ENCODE measurements at regions of chr1 and their contacts with region 1.

Region 1: DNA sequence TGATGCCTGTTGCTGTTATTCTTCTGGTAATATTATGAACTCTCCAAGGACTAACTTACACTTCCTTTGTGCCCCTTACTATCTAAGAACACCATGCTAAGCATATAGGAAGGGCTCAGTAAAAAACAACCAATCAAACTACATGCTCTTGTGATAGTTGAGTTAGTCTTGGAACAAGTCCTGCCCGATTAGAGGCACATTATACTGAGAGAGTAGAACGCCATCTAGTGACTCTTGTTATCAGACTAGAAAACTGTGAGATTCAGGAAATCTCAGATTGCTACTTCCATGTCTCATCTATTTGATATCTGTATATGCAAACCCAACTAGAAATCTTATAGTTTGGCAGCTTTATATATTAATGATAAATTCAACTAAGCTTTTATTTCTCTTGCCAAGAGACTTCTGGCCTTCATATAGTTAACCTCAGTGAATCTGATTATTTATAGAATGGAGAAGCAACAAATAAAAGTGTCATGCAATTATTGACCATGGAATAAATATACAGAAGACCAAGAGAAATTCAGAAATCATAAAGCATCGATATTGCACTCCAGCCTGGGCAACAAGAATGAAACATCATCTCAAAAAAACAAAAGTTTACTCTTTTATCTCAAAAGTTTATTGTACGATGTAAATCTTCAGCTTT is 7.8 kb upstream of the SRRM1 start:
- DNase-seq: peak; percentile 66
- H3K4me3 ChIP-seq: no peak overlapping the region
- H3K27ac ChIP-seq: no peak overlapping the region
- H3K4me1 ChIP-seq: no peaks in the 10 kb centered on the region
- H3K27me3 ChIP-seq: no peaks in the 10 kb centered on the region
- CTCF ChIP-seq: peak; percentile 76
- EP300 ChIP-seq: no peak
- RAD21 ChIP-seq: peak; percentile 86

Region 2: GRCh38 chr1:24541711-24542346 is 93.5 kb before region 1 on chr1:
- CTCF ChIA-PET with region 1: interaction called, 25 read pairs
- POLR2A ChIA-PET with region 1: no interaction called
- DNase-seq: peak; percentile 46
- H3K4me3 ChIP-seq: no peak overlapping the region; a peak in 1 of 4 replicates
- H3K27ac ChIP-seq: no peak overlapping the region
- H3K4me1 ChIP-seq: no peaks in the 10 kb centered on the region
- H3K27me3 ChIP-seq: no peaks in the 10 kb centered on the region
- CTCF ChIP-seq: peak; percentile 73
- EP300 ChIP-seq: no peak
- RAD21 ChIP-seq: peak; percentile 63

Region 3: DNA sequence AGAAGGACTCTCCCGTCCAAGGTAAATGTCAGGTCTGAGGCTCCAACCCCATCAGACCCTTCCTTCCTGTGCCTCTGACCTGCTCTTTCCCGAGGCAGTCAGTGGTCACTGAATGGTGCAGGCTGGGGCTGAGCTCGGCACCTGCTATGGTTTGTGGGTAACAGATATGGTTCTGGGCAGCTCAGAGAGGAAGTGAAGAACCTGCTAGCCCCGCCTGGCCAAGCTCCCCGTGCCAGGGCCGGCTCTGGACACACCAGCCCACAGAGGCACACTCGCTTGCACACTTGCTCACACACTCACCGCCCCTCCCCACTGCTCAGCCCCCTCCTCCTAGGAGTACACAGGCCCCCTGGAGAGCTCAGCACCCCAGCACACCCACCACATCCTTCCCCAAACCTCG is 63.0 kb before region 1 on chr1:
- CTCF ChIA-PET with region 1: no interaction called
- POLR2A ChIA-PET with region 1: no interaction called
- DNase-seq: no peak
- H3K4me3 ChIP-seq: no peak overlapping the region
- H3K27ac ChIP-seq: no peak overlapping the region
- H3K4me1 ChIP-seq: no peaks in the 10 kb centered on the region; a peak in 1 of 4 replicates
- H3K27me3 ChIP-seq: no peaks in the 10 kb centered on the region
- CTCF ChIP-seq: no peak
- EP300 ChIP-seq: no peak
- RAD21 ChIP-seq: no peak

Measured in SK-N-SH (cell line).